Activated CD4-positive, alpha-beta memory T cell treated with anti-CD3 and anti-CD28 coated beads, Interleukin-2, amount 10 ng/mL, durations not matched to agents 7 days and 5 days (primary cell): ENCODE measurements at regions of chr15 and their contacts with region 1.

Region 1: GRCh38 chr15:40323239-40323952 is at the start of gene INAFM2:
- DNase-seq: peak; percentile 89
- H3K4me3 Mint-ChIP-seq: peak within 1 kb of the TSS; percentile 63
- H3K27ac Mint-ChIP-seq: no peak within 1 kb of the TSS
- H3K4me1 Mint-ChIP-seq: peaks cover 34% of the 10 kb centered on the region
- H3K27me3 Mint-ChIP-seq: peaks cover 11% of the 10 kb centered on the region
- total RNA-seq, gene INAFM2: 8.7 to 8.9 TPM

Region 2: GRCh38 chr15:40146037-40146436 is 177.4 kb before region 1 on chr15:
- CTCF ChIA-PET with region 1: no interaction called
- POLR2A ChIA-PET with region 1: no interaction called
- DNase-seq: no peak
- H3K4me3 Mint-ChIP-seq: no peak overlapping the region
- H3K27ac Mint-ChIP-seq: no peak overlapping the region
- H3K4me1 Mint-ChIP-seq: no peaks in the 10 kb centered on the region
- H3K27me3 Mint-ChIP-seq: peaks cover 16% of the 10 kb centered on the region

Region 3: GRCh38 chr15:40421246-40422157 is 98.1 kb after region 1 on chr15:
- CTCF ChIA-PET with region 1: interaction called, 15 read pairs
- POLR2A ChIA-PET with region 1: no interaction called
- DNase-seq: peak; percentile 84
- H3K4me3 Mint-ChIP-seq: no peak overlapping the region
- H3K27ac Mint-ChIP-seq: no peak overlapping the region
- H3K4me1 Mint-ChIP-seq: peaks cover 2% of the 10 kb centered on the region
- H3K27me3 Mint-ChIP-seq: peaks cover 1% of the 10 kb centered on the region